Breast epithelium (tissue), 4 donors: ENCODE measurements at regions of chr20 and their contacts with region 1.

Region 1: DNA sequence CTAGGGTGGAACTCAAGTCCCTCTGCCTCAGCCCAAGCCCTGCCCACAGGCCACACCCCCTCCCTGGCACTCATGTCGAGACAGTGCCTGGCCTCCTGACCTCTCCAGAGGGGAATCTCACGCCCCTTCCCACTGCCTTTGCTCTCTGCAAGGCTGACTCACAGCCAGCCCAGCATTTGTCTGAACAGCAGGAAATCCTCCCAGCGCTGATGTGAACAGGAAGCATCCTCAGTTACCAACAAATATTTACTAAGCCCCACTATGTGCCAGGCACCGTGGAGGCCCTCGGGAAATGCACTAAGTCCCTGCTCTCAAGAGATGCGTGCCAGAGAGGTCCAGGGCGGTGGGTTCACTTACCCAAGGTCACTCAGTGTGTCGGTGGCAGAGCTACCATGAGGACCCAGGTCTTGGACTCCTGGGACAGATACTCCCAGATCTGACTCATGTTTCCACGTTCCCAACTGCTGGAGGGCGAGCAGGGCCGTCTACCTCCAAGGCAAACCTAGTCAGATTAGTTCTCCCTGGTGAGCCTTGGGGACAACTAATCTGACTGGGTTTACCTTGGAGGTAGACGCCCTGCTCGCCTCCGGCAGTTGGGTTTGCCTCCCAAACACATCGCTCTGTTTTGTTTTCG is 7.8 kb downstream of the ADA start:
- DNase-seq: no peak
- H3K4me3 ChIP-seq: no peak overlapping the region
- H3K27ac ChIP-seq: peak overlapping the region; percentile 71 to 89
- H3K4me1 ChIP-seq: peaks cover 3 to 4% of the 10 kb centered on the region in 2 donors
- H3K27me3 ChIP-seq: no peaks in the 10 kb centered on the region
- CTCF ChIP-seq: no peak
- POLR2A ChIP-seq: no peak

Region 2: DNA sequence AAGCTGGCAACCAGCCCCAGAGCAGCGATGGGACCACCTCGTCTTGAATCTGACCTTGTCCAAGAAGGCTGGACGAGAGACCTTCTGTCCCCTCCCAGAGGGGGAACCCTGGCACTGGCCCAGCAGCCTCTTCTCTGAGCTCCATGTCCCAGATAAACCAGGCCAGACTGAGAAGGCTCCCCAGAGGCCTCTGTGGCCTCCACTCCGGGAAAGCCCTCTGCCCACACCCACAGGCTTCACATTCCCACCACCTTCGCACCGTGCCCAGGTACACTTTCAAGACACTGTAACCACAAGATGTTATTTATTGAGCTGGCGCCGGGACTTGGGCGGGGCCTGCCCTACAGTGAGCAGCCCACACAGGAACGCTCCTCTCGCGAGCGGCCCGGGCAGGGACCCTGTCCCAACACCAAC is 25.4 kb before region 1 on chr20:
- intact Hi-C with region 1: loop called (anchors 1 kb)
- DNase-seq: no peak
- H3K4me3 ChIP-seq: no peak overlapping the region
- H3K27ac ChIP-seq: peak overlapping the region in 1 of 2 donors; percentile 19
- H3K4me1 ChIP-seq: peaks cover 0 to 5% of the 10 kb centered on the region in 2 donors
- H3K27me3 ChIP-seq: no peaks in the 10 kb centered on the region
- CTCF ChIP-seq: no peak
- POLR2A ChIP-seq: no peak

Region 3: GRCh38 chr20:45268531-45268930 is 624.8 kb after region 1 on chr20:
- intact Hi-C with region 1: no loop called
- DNase-seq: no peak
- H3K4me3 ChIP-seq: no peak overlapping the region
- H3K27ac ChIP-seq: no peak overlapping the region
- H3K4me1 ChIP-seq: no peaks in the 10 kb centered on the region
- H3K27me3 ChIP-seq: no peaks in the 10 kb centered on the region
- CTCF ChIP-seq: no peak
- POLR2A ChIP-seq: no peak